Thyroid gland (tissue), 4 donors: ENCODE measurements at regions of chr9 and their contacts with region 1.

Region 1: DNA sequence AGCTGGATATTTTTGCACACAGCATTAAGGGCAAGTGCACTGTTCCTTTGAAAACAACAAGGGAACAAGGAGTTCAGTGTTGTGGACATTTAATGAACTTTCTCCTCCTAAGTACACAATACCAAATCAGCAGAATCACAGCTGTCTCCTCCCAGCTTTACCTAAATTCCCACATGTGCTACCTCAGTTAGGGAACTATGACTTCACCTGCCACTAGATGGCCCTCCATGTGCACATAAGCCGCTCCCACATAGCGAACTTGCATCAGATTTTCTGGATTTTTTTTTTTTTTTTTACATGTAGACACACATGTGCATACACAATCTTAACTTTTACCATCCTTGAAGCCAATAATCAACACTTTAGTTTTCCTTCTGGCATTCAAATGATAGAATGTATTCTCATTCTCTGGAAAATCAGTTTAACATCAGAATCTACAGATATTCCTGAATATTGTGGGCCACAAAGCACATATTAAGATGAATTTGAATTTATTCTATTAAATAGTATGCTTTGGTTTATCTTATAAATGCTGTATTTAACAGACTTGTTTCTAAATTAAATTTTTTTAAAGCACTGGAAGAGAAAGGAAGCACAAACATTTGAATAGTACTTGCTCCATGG is 123.6 kb downstream of the PALM2AKAP2 start:
- DNase-seq: peak; percentile 69 to 77
- H3K4me3 ChIP-seq: no peak overlapping the region
- H3K27ac ChIP-seq: no peak overlapping the region
- H3K4me1 ChIP-seq: peaks cover 16 to 49% of the 10 kb centered on the region in 2 donors
- H3K27me3 ChIP-seq: no peaks in the 10 kb centered on the region
- CTCF ChIP-seq: peak; percentile 35 to 98 (median 81)
- POLR2A ChIP-seq: no peak

Region 2: DNA sequence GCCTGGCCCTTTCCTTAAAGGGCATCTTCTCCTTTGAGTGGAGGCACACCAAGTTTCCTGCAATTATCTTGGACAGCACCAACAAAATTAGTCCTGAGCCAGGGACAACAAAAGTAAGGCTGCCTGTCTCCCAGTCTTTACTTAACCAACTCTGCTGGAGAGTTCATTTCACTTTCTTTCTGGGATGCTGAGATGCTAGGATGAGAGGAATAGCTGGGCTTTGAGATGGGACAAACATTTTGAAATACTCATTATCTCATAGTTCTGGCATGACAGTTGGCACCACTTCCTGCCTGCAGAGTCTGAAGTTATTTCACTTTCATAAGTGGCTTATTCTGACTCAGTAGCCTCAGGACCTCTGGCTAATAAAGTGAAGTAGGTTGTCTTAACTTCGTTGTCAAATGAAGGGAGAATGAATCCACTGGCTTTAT is 147.3 kb after region 1 on chr9:
- intact Hi-C with region 1: loop called (anchors 5 kb)
- DNase-seq: peak in 1 of 2 donors; percentile 12
- H3K4me3 ChIP-seq: peak overlapping the region in 1 of 3 donors; percentile 10
- H3K27ac ChIP-seq: peak overlapping the region in 2 of 3 donors; percentile 2 to 62
- H3K4me1 ChIP-seq: peaks cover 0 to 20% of the 10 kb centered on the region in 2 donors
- H3K27me3 ChIP-seq: no peaks in the 10 kb centered on the region
- CTCF ChIP-seq: no peak
- POLR2A ChIP-seq: no peak

Region 3: GRCh38 chr9:110069326-110070248 is 166.0 kb after region 1 on chr9:
- intact Hi-C with region 1: loop called (anchors 5 kb)
- DNase-seq: peak in 1 of 2 donors; percentile 23
- H3K4me3 ChIP-seq: no peak overlapping the region
- H3K27ac ChIP-seq: peak overlapping the region in 2 of 3 donors; percentile 44 to 55
- H3K4me1 ChIP-seq: peaks cover 10 to 33% of the 10 kb centered on the region in 2 donors
- H3K27me3 ChIP-seq: no peaks in the 10 kb centered on the region
- CTCF ChIP-seq: no peak
- POLR2A ChIP-seq: no peak

Region 4: GRCh38 chr9:110156902-110157301 is 253.3 kb after region 1 on chr9:
- intact Hi-C with region 1: loop called (anchors 2 kb)
- DNase-seq: no peak
- H3K4me3 ChIP-seq: no peak overlapping the region
- H3K27ac ChIP-seq: peak overlapping the region in 1 of 3 donors; percentile 54
- H3K4me1 ChIP-seq: peaks cover 20 to 37% of the 10 kb centered on the region in 2 donors
- H3K27me3 ChIP-seq: no peaks in the 10 kb centered on the region
- CTCF ChIP-seq: no peak
- POLR2A ChIP-seq: no peak